ENCODE measurements at regions of chr2 and their contacts with region 1.

Region 1: DNA sequence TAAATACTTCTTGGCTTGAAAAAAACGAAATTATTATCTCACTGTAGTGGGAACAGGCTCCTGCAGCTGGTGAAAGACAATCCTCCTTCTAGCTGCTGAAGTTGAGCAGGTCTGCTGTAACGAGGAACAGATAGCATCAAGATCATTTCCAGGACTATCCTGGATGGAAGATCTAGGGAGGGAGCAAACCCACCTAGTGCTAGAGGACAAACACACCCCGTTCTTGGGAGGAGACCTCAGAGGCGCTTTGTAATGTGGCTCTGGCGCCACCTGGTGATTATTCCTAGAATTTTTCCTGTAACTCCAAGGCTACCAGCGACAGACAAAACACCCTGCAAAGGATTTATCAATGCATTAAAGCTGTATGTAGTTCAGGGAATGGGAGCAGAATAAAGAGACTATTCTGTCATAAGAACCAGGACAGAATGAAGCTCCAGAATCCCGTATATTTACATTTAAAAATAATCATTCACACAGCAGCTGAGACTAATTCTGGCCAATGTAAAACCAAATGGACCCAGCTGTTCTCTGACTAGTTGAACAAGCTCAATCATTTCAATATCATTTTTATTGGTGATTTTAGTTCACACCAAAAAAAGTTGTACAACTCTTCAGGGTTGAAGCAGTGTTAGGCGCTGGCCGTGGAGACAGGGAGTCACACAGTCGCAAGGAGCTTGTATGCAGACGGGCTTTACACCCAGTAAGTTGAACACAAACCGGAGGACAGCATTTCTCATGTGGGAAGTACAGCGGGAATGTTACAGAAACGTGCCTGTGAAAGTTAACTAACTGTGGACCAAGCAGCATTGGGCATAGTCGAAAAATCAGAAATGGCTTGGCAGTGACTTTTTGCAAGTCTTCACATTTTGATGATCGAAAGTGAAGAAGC is 290.3 kb downstream of the TRIB2 start:
- DNase-seq: peak; percentile 7
- H3K4me3 ChIP-seq: no peak overlapping the region; the same call in 1 of the 2 replicates
- CTCF ChIP-seq: peak; percentile 70

Region 2: GRCh38 chr2:11829947-11830707 is 1176.9 kb before region 1 on chr2:
- CTCF ChIA-PET with region 1: interaction called, 22 read pairs
- POLR2A ChIA-PET with region 1: interaction called, 3 read pairs
- DNase-seq: peak; percentile 93
- H3K4me3 ChIP-seq: peak overlapping the region; percentile 40
- CTCF ChIP-seq: peak; percentile 37

Region 3: DNA sequence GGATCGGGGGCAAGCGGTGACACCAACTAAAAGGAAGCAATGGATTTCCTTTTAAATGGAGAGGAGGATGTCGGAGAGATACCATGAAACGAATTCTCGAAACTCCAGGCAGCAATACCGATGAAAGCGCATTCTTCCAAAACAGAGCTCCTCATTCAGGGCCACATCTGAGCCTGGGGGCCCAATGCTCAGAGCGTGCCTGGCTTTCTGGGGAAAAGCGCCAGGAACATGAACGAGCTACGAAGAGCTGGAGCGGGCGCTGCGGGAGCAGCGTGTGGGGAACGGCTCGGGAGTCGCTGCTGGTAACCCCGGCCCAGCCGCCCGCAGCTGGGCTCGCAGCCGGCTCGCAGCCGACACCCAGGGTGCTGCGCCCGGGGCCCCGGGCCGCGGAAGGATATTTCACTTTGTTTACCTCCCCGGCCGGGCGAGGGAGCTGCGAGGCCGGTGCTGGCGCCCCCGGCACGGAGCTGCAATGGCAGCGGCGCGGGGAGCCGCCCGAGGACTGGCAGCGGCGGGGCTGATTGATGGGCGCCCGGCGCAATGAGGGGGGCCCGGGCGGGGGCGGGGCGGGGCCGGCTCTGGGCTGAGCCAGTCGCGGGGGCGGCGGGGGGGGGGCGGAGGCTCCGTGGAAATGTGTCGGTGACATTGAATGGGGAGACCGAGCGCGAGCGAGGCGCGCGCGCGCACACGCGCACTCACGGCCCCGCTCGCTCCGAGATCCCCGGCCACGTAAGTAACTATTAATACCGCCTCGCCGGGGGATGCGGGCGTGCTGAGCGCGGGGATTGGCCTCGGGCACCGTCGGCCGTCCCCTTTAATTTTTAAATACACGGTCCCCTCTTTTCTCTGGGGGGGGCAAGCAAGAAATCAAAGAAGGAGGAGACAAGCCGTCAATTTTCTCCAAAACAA is 290.5 kb before region 1 on chr2 and contains the start of gene TRIB2:
- CTCF ChIA-PET with region 1: interaction called, 71 read pairs
- POLR2A ChIA-PET with region 1: interaction called, 4 read pairs
- DNase-seq: no peak
- H3K4me3 ChIP-seq: peak within 1 kb of the TSS; percentile 86
- CTCF ChIP-seq: peak; percentile 10

Region 4: GRCh38 chr2:12990523-12990922 is 16.6 kb before region 1 on chr2:
- CTCF ChIA-PET with region 1: interaction called, 31 read pairs
- POLR2A ChIA-PET with region 1: no interaction called
- DNase-seq: no peak
- H3K4me3 ChIP-seq: no peak overlapping the region
- CTCF ChIP-seq: no peak

Region 5: GRCh38 chr2:13218205-13218604 is 211.1 kb after region 1 on chr2:
- CTCF ChIA-PET with region 1: no interaction called
- POLR2A ChIA-PET with region 1: no interaction called
- DNase-seq: no peak
- H3K4me3 ChIP-seq: no peak overlapping the region
- CTCF ChIP-seq: no peak